Activated CD4-positive, alpha-beta memory T cell treated with anti-CD3 and anti-CD28 coated beads for 36 hours (primary cell): ENCODE measurements at regions of chr1 and their contacts with region 1.

Region 1: DNA sequence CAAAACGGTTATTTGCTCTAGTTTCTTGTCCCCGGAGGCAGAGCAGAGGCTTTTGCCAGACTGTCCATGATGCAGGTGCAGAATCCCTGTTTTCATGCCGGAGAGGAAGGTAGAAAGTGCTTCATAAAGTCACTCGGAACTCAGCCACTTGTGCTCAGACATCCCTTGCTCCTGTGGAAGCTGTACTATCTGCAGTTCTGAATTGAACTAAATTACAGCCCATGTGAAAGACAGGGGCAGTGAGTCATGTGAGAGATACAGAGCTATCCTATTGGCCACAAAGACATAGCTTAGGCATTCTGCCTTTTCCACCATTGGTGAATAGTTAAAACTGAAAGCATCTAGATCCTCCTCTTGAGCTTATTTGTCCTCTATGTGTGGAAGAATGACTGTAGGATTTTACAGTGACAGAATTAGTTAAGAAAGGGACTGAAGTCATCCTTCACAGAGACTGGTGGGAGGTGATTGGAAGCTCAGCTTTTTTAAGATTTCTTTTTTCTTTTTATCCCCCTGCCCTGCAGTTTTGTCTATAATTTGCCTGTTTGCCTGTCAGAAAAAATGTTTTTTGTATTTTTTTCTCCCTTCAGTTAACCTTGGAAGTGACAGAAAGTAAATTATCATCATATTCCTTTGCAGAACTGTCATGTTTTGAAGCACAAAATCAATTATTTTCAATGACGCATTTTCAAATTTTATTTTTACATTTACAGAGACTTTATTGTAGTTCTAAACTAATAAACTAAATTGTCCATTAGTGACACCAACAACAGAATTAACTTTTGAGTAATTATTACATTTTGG is 298.6 kb downstream of the PTPRC start:
- DNase-seq: peak; percentile 53
- H3K4me3 Mint-ChIP-seq: peak overlapping the region; percentile 84
- H3K27ac Mint-ChIP-seq: peak overlapping the region; percentile 77
- H3K4me1 Mint-ChIP-seq: peaks cover 23% of the 10 kb centered on the region
- H3K27me3 Mint-ChIP-seq: no peaks in the 10 kb centered on the region

Region 2: DNA sequence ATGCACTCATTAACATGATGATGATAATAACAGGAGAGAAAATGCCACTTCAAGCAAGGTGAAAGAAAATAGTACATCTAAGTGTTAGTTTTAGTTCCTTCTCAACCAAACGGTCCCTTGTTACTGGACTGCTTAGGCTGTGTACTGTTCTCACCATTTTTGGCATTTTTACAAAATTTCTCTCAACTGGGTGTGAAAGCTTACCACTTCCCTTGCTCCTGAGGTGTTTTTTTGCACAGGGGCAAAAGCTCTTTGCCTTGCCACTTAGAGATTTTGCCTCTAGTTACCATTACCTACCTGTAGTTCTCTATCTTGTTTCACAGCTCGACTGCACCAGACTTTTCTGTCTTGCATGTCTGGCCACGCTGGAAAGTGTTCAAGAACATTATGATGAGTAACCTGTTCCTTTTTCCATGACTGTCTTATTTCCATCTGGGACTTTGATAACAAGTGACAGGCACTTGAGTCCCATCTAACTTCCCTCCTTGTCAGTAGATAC is 769.9 kb before region 1 on chr1:
- CTCF ChIA-PET with region 1: no interaction called
- POLR2A ChIA-PET with region 1: no interaction called
- intact Hi-C with region 1: loop called (anchors 10 kb)
- DNase-seq: peak; percentile 33
- H3K4me3 Mint-ChIP-seq: peak overlapping the region; percentile 48
- H3K27ac Mint-ChIP-seq: peak overlapping the region; percentile 92
- H3K4me1 Mint-ChIP-seq: peaks cover 82% of the 10 kb centered on the region
- H3K27me3 Mint-ChIP-seq: no peaks in the 10 kb centered on the region

Region 3: DNA sequence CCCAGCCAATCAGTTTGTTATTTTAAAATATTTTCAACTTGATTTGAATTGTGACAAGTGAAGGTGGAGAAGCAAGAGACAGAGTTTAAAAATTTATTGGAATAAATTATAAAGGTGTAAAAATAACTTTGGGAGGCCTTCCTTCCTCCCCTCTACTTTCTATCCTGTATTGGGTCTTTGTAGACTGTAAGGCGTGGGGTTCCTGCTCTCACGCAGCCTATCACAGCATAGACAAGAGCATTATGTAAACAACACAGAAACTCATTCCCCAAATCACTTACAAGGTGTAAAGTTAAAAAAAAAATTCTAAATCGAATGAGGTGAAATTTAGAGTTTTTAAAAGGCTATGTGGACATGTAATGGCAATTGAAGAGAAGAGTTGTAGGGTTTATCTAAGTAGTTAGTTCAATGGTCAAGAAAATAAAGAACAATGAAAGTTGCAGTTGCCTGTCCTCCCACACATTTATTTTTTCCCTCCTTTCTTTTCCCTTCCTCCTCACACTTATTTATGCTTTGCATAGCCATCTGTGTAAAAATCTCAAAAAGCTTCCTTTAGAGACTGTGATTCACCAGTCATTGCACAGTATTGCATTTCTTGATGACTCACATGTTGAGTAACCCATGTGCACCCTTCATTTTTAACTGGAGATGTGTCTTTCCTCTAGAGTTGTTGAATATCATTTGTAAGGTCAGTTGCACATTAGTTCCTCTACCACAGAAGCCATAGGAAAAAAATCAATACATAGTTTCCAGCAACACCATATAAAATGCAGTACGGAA is 56.4 kb before region 1 on chr1:
- CTCF ChIA-PET with region 1: no interaction called
- POLR2A ChIA-PET with region 1: no interaction called
- intact Hi-C with region 1: loop called (anchors 5 kb)
- DNase-seq: no peak
- H3K4me3 Mint-ChIP-seq: no peak overlapping the region
- H3K27ac Mint-ChIP-seq: peak overlapping the region; percentile 26
- H3K4me1 Mint-ChIP-seq: peaks cover 13% of the 10 kb centered on the region
- H3K27me3 Mint-ChIP-seq: no peaks in the 10 kb centered on the region

Region 4: GRCh38 chr1:198959032-198959431 is 21.6 kb after region 1 on chr1:
- CTCF ChIA-PET with region 1: no interaction called
- POLR2A ChIA-PET with region 1: no interaction called
- intact Hi-C with region 1: loop called (anchors 2 kb)
- DNase-seq: no peak
- H3K4me3 Mint-ChIP-seq: no peak overlapping the region
- H3K27ac Mint-ChIP-seq: peak overlapping the region; percentile 35
- H3K4me1 Mint-ChIP-seq: peaks cover 23% of the 10 kb centered on the region
- H3K27me3 Mint-ChIP-seq: no peaks in the 10 kb centered on the region

Region 5: GRCh38 chr1:199089393-199090122 is 152.1 kb after region 1 on chr1:
- CTCF ChIA-PET with region 1: no interaction called
- POLR2A ChIA-PET with region 1: no interaction called
- intact Hi-C with region 1: loop called (anchors 5 kb)
- DNase-seq: peak; percentile 41
- H3K4me3 Mint-ChIP-seq: no peak overlapping the region
- H3K27ac Mint-ChIP-seq: no peak overlapping the region
- H3K4me1 Mint-ChIP-seq: peaks cover 14% of the 10 kb centered on the region
- H3K27me3 Mint-ChIP-seq: no peaks in the 10 kb centered on the region

Region 6: DNA sequence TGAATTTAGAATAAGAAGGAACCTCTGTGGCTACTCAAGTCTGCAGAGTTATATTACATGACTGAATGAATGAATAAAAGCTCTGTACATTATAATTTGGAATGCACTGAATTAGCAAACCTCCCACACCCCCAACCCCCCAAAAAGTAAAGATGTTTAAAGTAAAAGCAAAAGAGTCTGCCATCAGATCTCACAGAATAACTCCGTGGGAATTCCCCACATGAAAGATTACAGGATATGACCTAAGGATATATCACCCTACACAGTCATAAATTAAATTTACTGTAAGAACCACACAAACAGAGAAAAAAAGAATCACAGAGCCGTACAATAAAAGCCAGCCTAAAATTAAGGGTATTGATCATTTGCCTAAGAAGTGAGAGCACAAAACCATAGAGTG is 288.7 kb after region 1 on chr1:
- CTCF ChIA-PET with region 1: no interaction called
- POLR2A ChIA-PET with region 1: no interaction called
- intact Hi-C with region 1: loop called (anchors 5 kb)
- DNase-seq: peak; percentile 47
- H3K4me3 Mint-ChIP-seq: peak overlapping the region; percentile 35
- H3K27ac Mint-ChIP-seq: peak overlapping the region; percentile 55
- H3K4me1 Mint-ChIP-seq: peaks cover 20% of the 10 kb centered on the region
- H3K27me3 Mint-ChIP-seq: no peaks in the 10 kb centered on the region